ENCODE measurements at regions of chr9 and their contacts with region 1.

Region 1: GRCh38 chr9:104991144-104991953 is 63.4 kb upstream of the ABCA1 start:
- DNase-seq: peak; percentile 89 to 90
- H3K4me3 ChIP-seq: peak overlapping the region in 2 of 3 donors; percentile 33 to 39
- H3K27ac ChIP-seq: peak overlapping the region; percentile 78 to 98 (median 92)
- H3K4me1 ChIP-seq: peaks cover 36 to 37% of the 10 kb centered on the region in 2 donors
- H3K27me3 ChIP-seq: no peaks in the 10 kb centered on the region
- CTCF ChIP-seq: no peak
- POLR2A ChIP-seq: peak in 1 of 2 donors; percentile 58

Region 2: GRCh38 chr9:105064315-105065097 is 73.2 kb after region 1 on chr9:
- intact Hi-C with region 1: loop called (anchors 10 kb)
- DNase-seq: peak; percentile 92
- H3K4me3 ChIP-seq: no peak overlapping the region
- H3K27ac ChIP-seq: peak overlapping the region; percentile 64 to 77 (median 70)
- H3K4me1 ChIP-seq: peaks cover 16 to 40% of the 10 kb centered on the region in 2 donors
- H3K27me3 ChIP-seq: no peaks in the 10 kb centered on the region
- CTCF ChIP-seq: no peak
- POLR2A ChIP-seq: no peak

Measured in thyroid gland (tissue), 4 donors.